ENCODE measurements at regions of chr5 and their contacts with region 1.

Region 1: DNA sequence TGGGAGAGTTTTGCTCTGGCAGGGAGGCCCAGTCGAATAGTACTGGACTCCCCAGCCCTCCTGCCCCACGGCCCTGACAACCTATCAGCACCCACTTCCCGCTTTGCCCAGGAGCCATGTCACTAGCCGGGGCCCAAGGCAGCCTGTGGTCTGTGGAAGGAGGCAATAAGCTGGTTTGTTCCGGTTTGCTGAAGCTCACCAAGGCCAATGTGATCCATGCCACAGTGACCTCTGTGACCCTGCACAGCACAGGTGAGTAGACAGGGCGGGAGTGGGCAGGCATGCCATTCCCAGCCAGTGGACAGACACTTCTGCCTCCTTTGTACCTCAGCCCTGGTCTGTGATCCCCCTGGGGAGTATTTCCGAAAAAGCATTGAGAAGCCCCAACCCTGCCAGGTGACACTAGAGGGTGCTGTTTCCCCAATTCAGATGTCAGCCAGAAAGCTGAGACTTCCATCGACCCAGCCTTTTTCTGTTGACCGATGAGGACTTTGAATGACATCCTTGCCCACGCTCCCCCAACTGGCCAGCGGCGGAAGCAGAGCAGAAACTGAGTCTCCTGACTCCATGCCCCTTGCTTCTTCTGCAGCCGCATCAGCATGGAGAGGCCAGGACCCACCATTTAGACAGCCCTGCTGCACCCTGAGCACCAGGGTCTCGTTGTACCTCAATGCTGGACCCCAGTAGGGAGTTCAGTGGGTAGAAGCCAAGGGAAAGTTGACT is 9.6 kb downstream of the PCYOX1L start:
- DNase-seq: peak; percentile 62 to 89
- H3K4me3 ChIP-seq: no peak overlapping the region
- H3K27ac ChIP-seq: no peak overlapping the region
- H3K4me1 ChIP-seq: peaks cover 0 to 3% (median 1%) of the 10 kb centered on the region in 4 experiments; a peak in 3 of 7 replicates
- H3K27me3 ChIP-seq: no peaks in the 10 kb centered on the region
- CTCF ChIP-seq: peak; percentile 68 to 98 (median 97)
- EP300 ChIP-seq: no peak
- POLR2A ChIP-seq: no peak
- RAD21 ChIP-seq: peak; percentile 84 to 85

Region 2: DNA sequence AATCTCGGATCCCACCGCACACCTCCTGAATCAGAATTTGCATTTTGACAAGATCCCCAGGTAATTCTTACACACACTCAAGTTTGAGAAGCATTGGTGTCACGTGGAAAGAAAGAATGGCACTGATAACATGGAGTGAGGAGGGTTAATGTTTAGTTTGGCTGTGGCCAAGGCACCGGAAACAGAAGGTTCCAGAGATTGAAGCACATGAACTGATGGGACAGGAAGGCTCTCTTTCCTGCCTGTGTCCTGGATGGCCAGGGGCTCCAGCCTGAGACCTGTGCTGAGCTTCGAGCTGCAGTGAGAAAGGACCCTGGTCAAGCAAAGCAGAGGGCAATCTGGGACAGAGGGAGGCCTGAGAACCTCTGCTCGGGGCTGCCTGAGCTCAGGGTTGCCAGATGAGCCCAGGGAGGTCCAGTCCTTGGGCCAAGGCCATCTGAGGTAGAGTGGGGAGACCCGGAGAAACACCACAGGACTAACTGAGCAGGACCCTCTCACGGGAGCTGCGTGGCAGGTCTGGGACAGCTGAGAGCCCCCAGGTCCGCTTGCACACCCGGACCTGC is 68.5 kb before region 1 on chr5:
- CTCF ChIA-PET with region 1: interaction called, 25 read pairs
- POLR2A ChIA-PET with region 1: no interaction called
- DNase-seq: no peak
- H3K4me3 ChIP-seq: no peak overlapping the region
- H3K27ac ChIP-seq: no peak overlapping the region
- H3K4me1 ChIP-seq: peaks cover 0 to 6% (median 2%) of the 10 kb centered on the region in 4 experiments; a peak in 3 of 7 replicates
- H3K27me3 ChIP-seq: no peaks in the 10 kb centered on the region
- CTCF ChIP-seq: no peak
- EP300 ChIP-seq: no peak
- POLR2A ChIP-seq: no peak
- RAD21 ChIP-seq: no peak

Region 3: GRCh38 chr5:149333711-149334443 is 33.5 kb before region 1 on chr5:
- CTCF ChIA-PET with region 1: interaction called, 20 read pairs
- POLR2A ChIA-PET with region 1: interaction called, 3 read pairs
- DNase-seq: no peak
- H3K4me3 ChIP-seq: no peak overlapping the region
- H3K27ac ChIP-seq: no peak overlapping the region
- H3K4me1 ChIP-seq: no peaks in the 10 kb centered on the region
- H3K27me3 ChIP-seq: no peaks in the 10 kb centered on the region
- CTCF ChIP-seq: no peak
- EP300 ChIP-seq: no peak
- POLR2A ChIP-seq: no peak
- RAD21 ChIP-seq: no peak

Region 4: GRCh38 chr5:149387081-149387631 is 19.7 kb after region 1 on chr5:
- CTCF ChIA-PET with region 1: interaction called, 220 read pairs
- POLR2A ChIA-PET with region 1: interaction called, 4 read pairs
- DNase-seq: no peak
- H3K4me3 ChIP-seq: no peak overlapping the region
- H3K27ac ChIP-seq: no peak overlapping the region
- H3K4me1 ChIP-seq: no peaks in the 10 kb centered on the region
- H3K27me3 ChIP-seq: no peaks in the 10 kb centered on the region; a peak in 1 of 7 replicates
- CTCF ChIP-seq: no peak
- EP300 ChIP-seq: no peak
- POLR2A ChIP-seq: no peak
- RAD21 ChIP-seq: no peak

Region 5: GRCh38 chr5:149416987-149417710 is 49.7 kb after region 1 on chr5:
- CTCF ChIA-PET with region 1: interaction called, 19 read pairs
- POLR2A ChIA-PET with region 1: interaction called, 3 read pairs
- DNase-seq: no peak
- H3K4me3 ChIP-seq: no peak overlapping the region
- H3K27ac ChIP-seq: no peak overlapping the region
- H3K4me1 ChIP-seq: peaks cover 0 to 9% (median 4%) of the 10 kb centered on the region in 4 experiments
- H3K27me3 ChIP-seq: no peaks in the 10 kb centered on the region
- CTCF ChIP-seq: no peak
- EP300 ChIP-seq: no peak
- POLR2A ChIP-seq: no peak
- RAD21 ChIP-seq: no peak

Region 6: DNA sequence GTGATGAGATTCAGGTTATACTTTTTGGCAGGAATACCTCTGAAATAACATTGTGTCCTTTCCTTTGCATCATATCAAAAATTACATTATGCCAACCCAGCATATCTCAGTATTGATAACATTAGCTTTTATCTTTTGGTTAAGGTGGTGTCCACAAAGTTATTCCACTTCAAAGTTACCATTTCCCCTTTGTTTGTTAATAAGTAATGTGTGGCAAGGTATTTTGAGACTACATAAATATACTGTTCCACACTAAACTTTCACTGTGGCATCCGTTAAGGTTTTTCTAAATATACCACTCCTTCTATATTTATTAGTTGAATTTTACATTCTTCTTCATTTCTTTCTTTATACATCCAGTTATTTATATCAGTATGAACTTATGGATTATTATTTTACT is 199.8 kb after region 1 on chr5:
- CTCF ChIA-PET with region 1: interaction called, 23 read pairs
- POLR2A ChIA-PET with region 1: no interaction called
- DNase-seq: no peak
- H3K4me3 ChIP-seq: no peak overlapping the region
- H3K27ac ChIP-seq: no peak overlapping the region
- H3K4me1 ChIP-seq: peaks cover 0 to 7% (median 4%) of the 10 kb centered on the region in 4 experiments; a peak in 3 of 7 replicates
- H3K27me3 ChIP-seq: no peaks in the 10 kb centered on the region
- CTCF ChIP-seq: no peak
- EP300 ChIP-seq: no peak
- POLR2A ChIP-seq: no peak
- RAD21 ChIP-seq: no peak

Measured in H1 (cell line).